ENCODE measurements at regions of chr9 and their contacts with region 1.

Region 1: GRCh38 chr9:15430920-15431844 is 8.5 kb downstream of the SNAPC3 start:
- DNase-seq: no peak
- ATAC-seq: no peak
- H3K4me3 ChIP-seq: no peak overlapping the region
- H3K27ac ChIP-seq: no peak overlapping the region
- H3K4me1 ChIP-seq: peaks cover 7% of the 10 kb centered on the region
- H3K27me3 ChIP-seq: no peaks in the 10 kb centered on the region
- CTCF ChIP-seq: no peak

Region 2: DNA sequence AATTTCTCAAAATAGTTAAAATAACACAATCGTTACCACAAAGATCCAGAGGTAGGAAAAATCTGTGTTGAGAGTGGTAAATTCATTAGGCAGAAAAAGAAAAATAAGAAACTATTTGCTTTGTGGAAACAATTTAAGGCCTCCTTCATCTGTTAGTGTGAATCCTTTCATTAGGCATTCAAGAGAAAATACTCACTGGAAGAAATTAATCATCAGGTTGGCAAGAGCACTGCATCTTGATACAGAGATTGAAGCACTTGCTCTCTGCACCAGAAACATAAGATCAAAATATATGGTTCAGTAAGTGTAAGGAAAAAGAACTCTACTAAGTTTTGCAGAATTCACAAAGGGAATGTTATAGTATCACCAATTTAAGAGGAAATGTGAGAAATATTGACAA is 168.6 kb before region 1 on chr9:
- intact Hi-C with region 1: no loop called
- DNase-seq: no peak
- ATAC-seq: no peak
- H3K4me3 ChIP-seq: no peak overlapping the region
- H3K27ac ChIP-seq: no peak overlapping the region
- H3K4me1 ChIP-seq: no peaks in the 10 kb centered on the region
- H3K27me3 ChIP-seq: no peaks in the 10 kb centered on the region
- CTCF ChIP-seq: no peak

Region 3: GRCh38 chr9:15469406-15469805 is 38.2 kb after region 1 on chr9:
- intact Hi-C with region 1: loop called in 1 of 2 experiments (anchors 5 kb)
- DNase-seq: no peak
- ATAC-seq: no peak
- H3K4me3 ChIP-seq: no peak overlapping the region
- H3K27ac ChIP-seq: no peak overlapping the region
- H3K4me1 ChIP-seq: no peaks in the 10 kb centered on the region
- H3K27me3 ChIP-seq: no peaks in the 10 kb centered on the region
- CTCF ChIP-seq: no peak

Region 4: GRCh38 chr9:15552636-15553527 is 121.7 kb after region 1 on chr9 and contains the start of gene CCDC171:
- intact Hi-C with region 1: no loop called
- DNase-seq: peak; percentile 91 to 96
- ATAC-seq: peak; percentile 96 to 99 (median 98)
- H3K4me3 ChIP-seq: peak within 1 kb of the TSS; percentile 79
- H3K27ac ChIP-seq: peak within 1 kb of the TSS; percentile 71
- H3K4me1 ChIP-seq: no peaks in the 10 kb centered on the region
- H3K27me3 ChIP-seq: no peaks in the 10 kb centered on the region
- CTCF ChIP-seq: no peak
- total RNA-seq, gene CCDC171: 0.44 to 1.6 (median 0.74) TPM